IMR-90 (cell line): ENCODE measurements at regions of chr11 and their contacts with region 1.

Region 1: DNA sequence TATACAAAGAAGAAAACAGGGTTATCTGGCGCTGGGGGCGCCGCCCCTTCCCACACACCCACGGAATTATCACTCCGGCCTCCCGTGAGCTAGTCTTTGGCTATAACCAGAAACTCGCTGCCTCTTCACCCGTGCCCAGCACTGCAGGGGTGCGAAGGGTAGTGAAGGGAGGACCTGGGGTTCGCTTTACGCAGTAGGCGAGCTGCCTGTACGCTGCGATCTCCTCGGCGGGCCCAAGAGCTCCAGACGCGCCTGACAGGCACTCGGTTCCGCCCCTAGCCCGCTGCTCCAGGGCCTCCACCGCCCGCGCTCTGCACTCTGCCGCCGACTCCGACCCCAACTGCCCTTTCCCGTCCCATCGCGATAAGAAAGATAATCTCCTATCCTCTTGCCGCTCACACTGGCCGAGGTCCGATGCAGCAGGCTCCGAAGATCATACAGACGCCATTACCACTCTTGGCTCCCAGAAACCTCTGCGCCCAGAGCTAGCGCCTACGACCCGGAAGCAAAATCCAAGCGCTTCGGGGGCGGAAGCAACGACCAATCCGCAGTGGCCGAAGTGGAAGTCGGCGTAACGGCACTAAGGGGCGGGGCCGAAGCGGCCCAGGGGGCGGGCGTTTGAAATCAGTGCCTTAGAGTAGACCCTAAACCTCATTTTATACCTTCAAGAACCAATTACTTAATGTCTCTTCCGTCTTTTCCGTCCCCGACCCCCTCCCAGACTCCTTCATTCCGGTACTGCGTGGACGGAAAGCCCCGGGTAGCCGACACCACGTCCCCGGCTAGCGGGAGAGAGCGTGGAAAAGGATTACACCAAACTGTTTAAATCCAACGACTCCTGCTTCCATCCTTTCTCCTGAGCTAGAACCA is at the starts of genes CWC15 and KDM4D:
- DNase-seq: peak; percentile 90
- ATAC-seq: peak; percentile 100
- H3K4me3 ChIP-seq: peak within 1 kb of the TSS; percentile 95
- H3K27ac ChIP-seq: peak within 1 kb of the TSS; percentile 95
- H3K4me1 ChIP-seq: no peaks in the 10 kb centered on the region
- H3K27me3 ChIP-seq: no peaks in the 10 kb centered on the region
- CTCF ChIP-seq: no peak
- POLR2A ChIP-seq: peak; percentile 78
- RAD21 ChIP-seq: no peak; the same call in 1 of the 2 replicates
- total RNA-seq, gene CWC15: 48.6 and 70.0 TPM in 2 replicates
- total RNA-seq, gene KDM4D: 0.90 and 1.1 TPM in 2 replicates

Region 2: DNA sequence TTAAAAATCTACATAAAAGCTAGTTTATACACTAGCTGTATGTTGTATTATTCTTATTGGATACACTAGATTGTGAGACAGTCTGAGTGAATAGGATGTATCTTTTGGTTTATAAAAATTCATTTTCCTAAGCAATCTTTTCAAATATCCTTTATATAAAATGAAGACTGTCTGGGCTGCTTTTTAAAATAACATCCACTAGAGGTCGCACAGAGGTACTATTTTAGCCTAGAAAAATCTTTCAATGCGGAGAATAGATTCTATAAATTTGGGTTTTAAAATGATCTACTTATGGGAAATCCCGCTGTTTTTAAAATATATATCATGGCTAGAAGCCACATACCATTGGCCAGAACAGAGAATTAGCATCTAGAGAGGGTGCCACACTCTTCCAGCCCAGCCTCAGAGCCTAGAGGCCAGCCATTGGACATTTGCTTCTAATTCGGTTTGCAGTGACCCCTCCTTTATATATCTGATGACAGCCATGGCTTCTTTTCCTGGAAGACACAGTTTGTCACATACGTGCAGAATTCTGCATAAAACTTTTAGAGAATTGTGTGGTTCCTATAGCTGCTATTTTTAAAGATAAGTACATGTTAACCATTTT is 453.8 kb before region 1 on chr11:
- CTCF ChIA-PET with region 1: no interaction called
- POLR2A ChIA-PET with region 1: no interaction called
- dilution Hi-C with region 1: no loop called
- in situ Hi-C with region 1: no loop called
- intact Hi-C with region 1: loop called (anchors 1 kb)
- DNase-seq: peak; percentile 49
- ATAC-seq: peak; percentile 79
- H3K4me3 ChIP-seq: no peak overlapping the region
- H3K27ac ChIP-seq: no peak overlapping the region
- H3K4me1 ChIP-seq: peaks cover 2% of the 10 kb centered on the region; the same call in 1 of the 2 replicates
- H3K27me3 ChIP-seq: peaks cover 8% of the 10 kb centered on the region
- CTCF ChIP-seq: peak; percentile 75
- POLR2A ChIP-seq: no peak
- RAD21 ChIP-seq: peak; percentile 64

Region 3: DNA sequence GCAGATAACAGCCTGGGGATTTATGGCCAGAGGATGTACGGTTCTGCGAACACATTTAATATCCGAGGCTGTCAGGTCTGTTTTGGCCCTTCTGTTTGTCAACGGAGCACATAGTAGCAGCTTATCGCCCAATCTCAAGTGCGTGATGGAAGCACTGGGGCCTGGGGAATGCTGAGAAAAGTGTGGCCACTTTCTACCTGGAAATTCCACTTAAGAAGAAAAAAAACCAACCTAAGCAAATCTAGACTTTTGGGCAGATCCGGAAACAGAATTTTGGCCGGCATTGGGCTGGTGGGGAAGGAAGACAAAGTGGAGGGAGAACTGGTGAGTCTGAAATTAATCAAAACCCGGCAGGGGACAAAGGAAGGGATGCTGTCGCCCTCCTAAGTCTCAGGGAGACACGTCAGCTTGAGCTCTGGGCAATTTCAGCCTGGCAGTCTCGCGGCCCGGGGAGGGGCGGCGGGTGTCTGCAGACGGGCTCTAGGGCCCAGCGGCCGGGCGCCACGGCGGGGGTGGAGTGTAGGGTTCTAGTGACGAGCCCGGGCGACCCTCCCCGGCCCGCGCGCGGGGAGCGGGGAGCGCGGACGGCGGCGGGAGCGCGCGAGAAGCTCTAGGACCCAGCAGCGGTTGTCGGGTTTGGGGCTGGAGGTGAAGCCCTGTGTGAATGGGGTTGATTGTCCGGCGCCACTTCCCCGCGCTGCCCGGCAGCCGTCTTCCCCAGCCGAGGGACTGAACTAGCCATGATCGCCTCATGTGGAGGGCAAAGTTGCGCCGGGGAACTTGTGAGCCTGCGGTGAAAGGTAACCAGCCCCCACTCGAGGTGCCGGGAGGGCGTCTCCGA is 205.4 kb before region 1 on chr11 and contains the start of gene AMOTL1:
- CTCF ChIA-PET with region 1: no interaction called
- POLR2A ChIA-PET with region 1: no interaction called
- dilution Hi-C with region 1: no loop called
- in situ Hi-C with region 1: no loop called
- intact Hi-C with region 1: loop called (anchors 5 kb)
- DNase-seq: peak; percentile 76
- ATAC-seq: peak; percentile 90
- H3K4me3 ChIP-seq: peak within 1 kb of the TSS; percentile 98
- H3K27ac ChIP-seq: peak within 1 kb of the TSS; percentile 97
- H3K4me1 ChIP-seq: peaks cover 13% of the 10 kb centered on the region
- H3K27me3 ChIP-seq: no peaks in the 10 kb centered on the region
- CTCF ChIP-seq: no peak; the same call in 1 of the 2 replicates
- POLR2A ChIP-seq: no peak
- RAD21 ChIP-seq: peak; percentile 26; the same call in 1 of the 2 replicates
- total RNA-seq, gene AMOTL1: 49.5 and 58.6 TPM in 2 replicates

Region 4: GRCh38 chr11:94876645-94877442 is 96.5 kb before region 1 on chr11:
- CTCF ChIA-PET with region 1: interaction called, 3 read pairs
- POLR2A ChIA-PET with region 1: no interaction called
- dilution Hi-C with region 1: no loop called
- in situ Hi-C with region 1: no loop called
- intact Hi-C with region 1: loop called (anchors 5 kb)
- DNase-seq: peak; percentile 98
- ATAC-seq: peak; percentile 97
- H3K4me3 ChIP-seq: no peak overlapping the region
- H3K27ac ChIP-seq: peak overlapping the region; percentile 97
- H3K4me1 ChIP-seq: peaks cover 15% of the 10 kb centered on the region
- H3K27me3 ChIP-seq: no peaks in the 10 kb centered on the region
- CTCF ChIP-seq: peak; percentile 52
- POLR2A ChIP-seq: 0 out of 2 replicates have a peak, but pooled peaks have one; percentile 21
- RAD21 ChIP-seq: peak; percentile 62

Region 5: DNA sequence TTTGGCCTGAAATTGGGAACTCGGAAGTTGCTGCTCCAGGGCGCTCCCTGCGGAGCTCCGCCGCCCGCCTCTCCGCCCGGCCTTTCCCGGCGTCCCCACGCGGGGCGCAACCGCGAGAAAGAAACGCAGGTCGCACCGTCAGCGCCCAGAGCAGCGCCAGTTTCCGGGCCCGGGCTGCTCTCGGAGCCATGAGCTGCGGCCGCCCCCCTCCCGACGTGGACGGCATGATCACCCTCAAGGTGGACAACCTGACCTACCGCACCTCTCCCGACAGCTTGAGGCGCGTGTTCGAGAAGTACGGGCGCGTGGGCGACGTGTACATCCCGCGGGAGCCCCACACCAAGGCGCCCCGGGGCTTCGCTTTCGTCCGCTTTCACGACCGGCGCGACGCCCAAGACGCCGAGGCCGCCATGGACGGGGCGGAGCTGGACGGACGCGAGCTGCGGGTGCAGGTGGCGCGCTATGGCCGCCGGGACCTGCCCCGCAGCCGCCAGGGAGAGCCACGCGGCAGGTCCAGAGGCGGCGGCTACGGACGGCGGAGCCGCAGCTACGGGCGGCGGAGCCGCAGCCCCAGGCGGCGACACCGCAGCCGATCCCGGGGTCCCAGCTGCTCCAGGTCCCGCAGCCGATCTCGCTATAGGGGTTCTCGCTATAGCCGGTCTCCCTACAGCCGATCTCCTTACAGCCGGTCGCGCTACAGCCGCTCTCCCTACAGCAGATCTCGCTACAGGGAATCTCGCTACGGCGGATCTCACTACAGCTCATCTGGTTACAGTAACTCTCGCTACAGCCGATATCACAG is 93.9 kb after region 1 on chr11:
- CTCF ChIA-PET with region 1: no interaction called
- POLR2A ChIA-PET with region 1: interaction called, 3 read pairs
- dilution Hi-C with region 1: no loop called
- in situ Hi-C with region 1: no loop called
- intact Hi-C with region 1: loop called (anchors 5 kb)
- DNase-seq: peak; percentile 72
- ATAC-seq: peak; percentile 90
- H3K4me3 ChIP-seq: peak overlapping the region; percentile 91
- H3K27ac ChIP-seq: peak overlapping the region; percentile 85
- H3K4me1 ChIP-seq: no peaks in the 10 kb centered on the region
- H3K27me3 ChIP-seq: no peaks in the 10 kb centered on the region
- CTCF ChIP-seq: peak; percentile 65
- POLR2A ChIP-seq: peak; percentile 57
- RAD21 ChIP-seq: peak; percentile 24; the same call in 1 of the 2 replicates

Region 6: DNA sequence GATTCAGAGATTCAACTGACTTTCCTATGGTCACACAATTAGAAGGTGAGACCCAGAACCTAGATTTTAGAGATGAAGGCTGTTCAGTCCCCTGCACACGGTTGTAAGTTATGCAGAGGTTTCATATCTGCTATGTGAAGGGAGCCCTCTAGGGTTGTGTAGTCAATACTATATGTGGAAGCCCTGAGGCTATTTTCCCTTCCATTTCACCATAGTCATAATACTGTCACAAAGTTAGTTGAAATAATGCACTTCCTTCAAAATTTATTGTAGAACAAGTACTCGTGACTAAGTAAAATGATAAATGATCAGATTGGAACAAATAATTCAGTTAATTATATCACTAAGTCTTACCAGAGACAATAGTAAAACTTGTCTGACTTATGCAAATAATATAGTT is 165.1 kb after region 1 on chr11:
- CTCF ChIA-PET with region 1: no interaction called
- POLR2A ChIA-PET with region 1: no interaction called
- dilution Hi-C with region 1: no loop called
- in situ Hi-C with region 1: no loop called
- intact Hi-C with region 1: loop called (anchors 10 kb)
- DNase-seq: no peak
- ATAC-seq: peak; percentile 38; the same call in 1 of the 2 replicates
- H3K4me3 ChIP-seq: no peak overlapping the region
- H3K27ac ChIP-seq: no peak overlapping the region
- H3K4me1 ChIP-seq: peaks cover 4% of the 10 kb centered on the region
- H3K27me3 ChIP-seq: no peaks in the 10 kb centered on the region; the same call in 1 of the 2 replicates
- CTCF ChIP-seq: 0 out of 2 replicates have a peak, but pooled peaks have one; percentile 23
- POLR2A ChIP-seq: no peak
- RAD21 ChIP-seq: no peak; the same call in 1 of the 2 replicates

Region 7: GRCh38 chr11:95764267-95764898 is 791.0 kb after region 1 on chr11:
- CTCF ChIA-PET with region 1: no interaction called
- POLR2A ChIA-PET with region 1: no interaction called
- dilution Hi-C with region 1: no loop called
- in situ Hi-C with region 1: no loop called
- intact Hi-C with region 1: loop called (anchors 5 kb)
- DNase-seq: peak; percentile 67
- ATAC-seq: peak; percentile 82
- H3K4me3 ChIP-seq: no peak overlapping the region
- H3K27ac ChIP-seq: no peak overlapping the region
- H3K4me1 ChIP-seq: peaks cover 2% of the 10 kb centered on the region; the same call in 1 of the 2 replicates
- H3K27me3 ChIP-seq: peaks cover 9% of the 10 kb centered on the region
- CTCF ChIP-seq: peak; percentile 75
- POLR2A ChIP-seq: no peak
- RAD21 ChIP-seq: peak; percentile 71